Activated T-helper 2 cell treated with anti-CD3 and anti-CD28 coated beads, Interferon-gamma antibody, Interleukin-2, Interleukin-4, amounts not matched to agents 10 μg/mL and 5 μg/mL and 100 μg/mL, durations not matched to agents 14 hours and 24 hours and 36 hours (primary cell): ENCODE measurements at regions of chr4 and their contacts with region 1.

Region 1: GRCh38 chr4:3041192-3042142 is 32.9 kb downstream of the HTT-AS start:
- DNase-seq: peak; percentile 43
- H3K4me3 Mint-ChIP-seq: peak overlapping the region; percentile 84
- H3K27ac Mint-ChIP-seq: peak overlapping the region; percentile 74
- H3K4me1 Mint-ChIP-seq: peaks cover 47% of the 10 kb centered on the region
- H3K27me3 Mint-ChIP-seq: peaks cover 3% of the 10 kb centered on the region

Region 2: DNA sequence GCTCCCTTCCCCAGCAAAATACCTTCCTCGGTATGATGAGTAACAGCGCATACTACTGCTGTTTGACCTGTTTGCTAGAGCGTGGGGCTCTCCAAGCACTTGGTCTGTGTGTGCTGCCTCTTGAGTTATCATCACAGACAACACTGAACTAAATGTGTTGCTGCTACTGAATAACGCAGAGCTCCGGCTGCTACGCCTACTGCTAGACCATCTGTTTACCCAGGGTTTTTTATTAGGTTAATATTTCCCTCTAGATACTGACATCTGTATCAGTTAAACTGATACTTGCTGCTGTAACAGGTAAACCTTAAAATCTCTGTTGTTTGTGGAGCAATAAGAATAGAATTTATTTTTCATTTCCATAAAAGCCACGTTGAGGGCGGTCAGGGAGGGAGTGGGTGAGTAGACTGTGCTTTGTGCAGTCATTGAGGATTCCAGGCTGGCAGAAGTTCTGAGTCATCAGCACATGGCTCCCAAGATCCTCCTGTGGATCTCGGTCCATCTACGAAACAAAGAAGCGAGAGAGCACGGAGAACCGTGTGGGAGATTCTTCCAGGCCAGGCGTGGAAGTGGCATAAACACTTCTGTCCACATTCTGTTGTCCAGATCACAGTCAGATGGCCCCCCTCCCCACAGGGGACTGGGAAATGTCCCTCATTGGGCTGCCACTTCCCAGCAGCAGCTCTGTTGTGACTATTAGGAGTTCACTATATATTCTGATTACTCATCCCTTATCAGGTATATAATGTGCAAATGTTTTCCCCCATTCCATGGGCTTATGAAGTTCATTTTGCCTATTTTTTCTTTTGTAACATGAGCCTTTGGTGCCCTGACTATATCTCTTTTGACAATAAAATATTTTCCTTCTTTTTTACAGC is 64.0 kb before region 1 on chr4:
- intact Hi-C with region 1: loop called (anchors 1 kb)
- DNase-seq: no peak
- H3K4me3 Mint-ChIP-seq: no peak overlapping the region
- H3K27ac Mint-ChIP-seq: no peak overlapping the region
- H3K4me1 Mint-ChIP-seq: no peaks in the 10 kb centered on the region
- H3K27me3 Mint-ChIP-seq: no peaks in the 10 kb centered on the region

Region 3: DNA sequence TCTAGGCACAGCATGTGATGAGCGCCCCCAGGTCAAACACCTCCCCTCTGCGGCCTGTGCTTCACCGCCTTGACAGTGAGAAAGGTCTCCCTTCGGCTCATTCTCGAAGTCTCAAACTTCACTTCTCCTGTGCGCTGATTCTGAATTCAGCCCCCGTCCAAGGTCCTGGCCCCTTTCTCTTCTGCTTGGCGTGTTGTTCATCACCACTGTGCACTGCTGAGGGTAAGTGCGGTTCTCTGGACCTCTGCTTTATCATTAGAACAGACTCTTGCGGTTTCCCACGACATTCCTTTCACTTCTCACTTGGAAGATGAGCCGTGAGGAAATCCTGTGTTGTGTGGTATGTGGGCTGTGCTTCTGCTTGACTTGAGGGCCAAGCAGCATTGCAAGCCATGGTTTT is 21.0 kb after region 1 on chr4:
- intact Hi-C with region 1: no loop called
- DNase-seq: no peak
- H3K4me3 Mint-ChIP-seq: no peak overlapping the region
- H3K27ac Mint-ChIP-seq: no peak overlapping the region
- H3K4me1 Mint-ChIP-seq: no peaks in the 10 kb centered on the region
- H3K27me3 Mint-ChIP-seq: no peaks in the 10 kb centered on the region